ENCODE measurements at regions of chr17 and their contacts with region 1.

Region 1: GRCh38 chr17:72556944-72557826 is 436.4 kb downstream of the SOX9 start:
- DNase-seq: peak; percentile 67
- H3K4me3 ChIP-seq: no peak overlapping the region
- H3K27ac ChIP-seq: no peak overlapping the region
- H3K4me1 ChIP-seq: peaks cover 23% of the 10 kb centered on the region
- H3K27me3 ChIP-seq: no peaks in the 10 kb centered on the region
- CTCF ChIP-seq: peak; percentile 80 to 88

Region 2: DNA sequence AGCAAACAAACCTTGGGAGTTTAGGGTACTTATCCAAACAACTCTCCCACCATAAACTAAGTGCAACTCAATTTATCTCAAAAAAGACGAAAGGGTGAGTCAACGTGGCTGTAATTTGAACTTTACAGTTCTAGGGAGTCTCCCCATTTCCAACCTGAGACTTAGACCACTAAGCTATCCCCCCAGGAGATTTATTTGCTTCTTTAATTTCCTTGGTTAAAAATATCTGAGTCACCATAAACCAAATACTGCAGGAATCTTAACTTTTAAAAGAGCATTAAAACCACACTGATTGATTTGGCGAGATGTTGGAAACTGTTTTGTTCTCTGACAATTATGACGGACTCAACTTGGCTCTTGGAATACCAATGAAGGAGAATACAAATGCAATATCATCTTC is 735.7 kb before region 1 on chr17:
- CTCF ChIA-PET with region 1: no interaction called
- dilution Hi-C with region 1: no loop called
- in situ Hi-C with region 1: no loop called
- intact Hi-C with region 1: no loop called
- DNase-seq: no peak
- H3K4me3 ChIP-seq: no peak overlapping the region
- H3K27ac ChIP-seq: no peak overlapping the region
- H3K4me1 ChIP-seq: no peaks in the 10 kb centered on the region
- H3K27me3 ChIP-seq: no peaks in the 10 kb centered on the region
- CTCF ChIP-seq: no peak

Region 3: GRCh38 chr17:72445055-72445991 is 111.9 kb before region 1 on chr17:
- CTCF ChIA-PET with region 1: no interaction called
- dilution Hi-C with region 1: no loop called
- in situ Hi-C with region 1: no loop called
- intact Hi-C with region 1: no loop called
- DNase-seq: no peak
- H3K4me3 ChIP-seq: no peak overlapping the region
- H3K27ac ChIP-seq: no peak overlapping the region
- H3K4me1 ChIP-seq: no peaks in the 10 kb centered on the region
- H3K27me3 ChIP-seq: no peaks in the 10 kb centered on the region
- CTCF ChIP-seq: no peak

Region 4: GRCh38 chr17:72510397-72511016 is 46.7 kb before region 1 on chr17:
- CTCF ChIA-PET with region 1: no interaction called
- dilution Hi-C with region 1: no loop called
- in situ Hi-C with region 1: no loop called
- intact Hi-C with region 1: no loop called
- DNase-seq: no peak
- H3K4me3 ChIP-seq: no peak overlapping the region
- H3K27ac ChIP-seq: no peak overlapping the region
- H3K4me1 ChIP-seq: no peaks in the 10 kb centered on the region
- H3K27me3 ChIP-seq: no peaks in the 10 kb centered on the region
- CTCF ChIP-seq: no peak

Region 5: DNA sequence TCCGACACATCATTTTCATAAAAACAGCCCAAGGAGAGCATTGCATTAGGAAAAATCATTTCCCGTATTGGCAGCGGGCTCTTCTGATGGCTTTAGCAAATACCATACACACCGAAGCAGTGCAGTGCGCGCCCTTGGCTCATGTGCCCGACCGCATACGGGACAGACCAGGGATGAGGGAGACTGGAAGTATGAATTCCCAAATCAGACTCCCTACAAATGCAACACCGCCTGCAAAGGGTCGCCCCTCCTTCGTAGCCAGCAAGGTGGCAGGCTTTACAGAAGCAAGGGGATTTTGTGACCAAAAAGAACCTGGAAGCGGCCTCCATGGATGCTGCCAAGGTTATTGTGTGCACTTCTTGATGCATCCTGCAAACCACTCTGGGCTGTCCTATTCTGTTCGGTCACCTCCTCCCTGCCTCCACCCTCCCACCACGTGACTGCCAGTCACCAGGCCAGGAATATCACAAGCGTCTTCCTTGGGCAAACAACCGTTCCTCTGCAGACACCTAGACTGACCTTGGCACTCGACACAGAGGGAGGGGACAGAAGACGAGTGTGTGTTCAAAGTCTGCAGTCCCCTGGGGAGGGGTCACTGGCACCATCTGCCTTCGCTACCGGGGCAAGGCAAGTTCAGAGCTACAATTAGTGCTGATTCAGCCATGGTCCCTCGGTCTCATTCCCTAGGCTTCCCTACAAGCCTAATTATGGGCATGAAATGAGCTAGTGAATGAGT is 74.9 kb after region 1 on chr17:
- CTCF ChIA-PET with region 1: no interaction called
- dilution Hi-C with region 1: no loop called
- in situ Hi-C with region 1: no loop called
- intact Hi-C with region 1: loop called (anchors 2 kb)
- DNase-seq: no peak
- H3K4me3 ChIP-seq: no peak overlapping the region
- H3K27ac ChIP-seq: no peak overlapping the region
- H3K4me1 ChIP-seq: peaks cover 30% of the 10 kb centered on the region
- H3K27me3 ChIP-seq: no peaks in the 10 kb centered on the region
- CTCF ChIP-seq: no peak

Region 6: DNA sequence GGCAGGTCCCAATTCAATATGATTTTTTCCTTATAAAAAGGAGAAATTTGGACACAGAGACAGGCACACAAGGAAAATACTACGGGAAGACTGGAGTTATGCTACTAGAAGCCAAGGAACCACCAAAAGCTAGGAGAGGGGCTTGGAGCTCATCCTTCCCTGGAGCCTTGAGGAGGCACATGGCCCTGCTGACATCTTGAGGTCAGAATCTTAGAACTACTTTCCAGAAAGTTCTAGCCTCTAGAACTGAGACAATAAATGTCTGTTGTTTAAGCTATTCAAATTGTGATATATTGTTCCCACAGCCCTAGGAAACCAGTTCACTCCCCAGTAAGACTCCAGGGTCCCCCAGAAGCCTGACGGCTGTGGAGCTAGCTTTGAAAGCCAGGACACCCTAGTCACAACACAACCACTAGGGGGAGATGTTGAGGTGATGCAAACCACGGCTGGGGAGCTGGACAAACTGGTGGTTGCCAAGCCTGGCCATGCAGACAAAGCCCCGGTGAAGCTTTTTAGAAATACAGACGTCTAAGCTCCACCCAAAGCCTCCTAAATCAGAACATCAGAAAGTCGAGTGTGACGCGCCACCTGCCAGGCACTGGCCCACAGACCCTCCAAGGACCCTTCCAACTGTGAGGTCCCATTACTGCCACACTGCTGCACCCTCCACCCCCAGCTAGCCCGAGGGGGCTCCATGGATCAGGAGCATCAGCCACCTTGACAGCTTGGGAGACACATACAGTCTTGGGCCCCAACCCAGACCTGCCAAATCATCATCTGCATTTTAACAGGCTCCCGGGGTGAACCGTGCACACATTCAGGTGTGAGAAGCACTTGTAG is 428.9 kb after region 1 on chr17:
- CTCF ChIA-PET with region 1: interaction called, 6 read pairs
- dilution Hi-C with region 1: no loop called
- in situ Hi-C with region 1: loop called in 1 of 2 experiments (anchors 25 kb)
- intact Hi-C with region 1: loop called (anchors 5 kb)
- DNase-seq: peak; percentile 58
- H3K4me3 ChIP-seq: no peak overlapping the region
- H3K27ac ChIP-seq: no peak overlapping the region
- H3K4me1 ChIP-seq: peaks cover 9% of the 10 kb centered on the region
- H3K27me3 ChIP-seq: no peaks in the 10 kb centered on the region
- CTCF ChIP-seq: peak; percentile 86 to 92

Region 7: DNA sequence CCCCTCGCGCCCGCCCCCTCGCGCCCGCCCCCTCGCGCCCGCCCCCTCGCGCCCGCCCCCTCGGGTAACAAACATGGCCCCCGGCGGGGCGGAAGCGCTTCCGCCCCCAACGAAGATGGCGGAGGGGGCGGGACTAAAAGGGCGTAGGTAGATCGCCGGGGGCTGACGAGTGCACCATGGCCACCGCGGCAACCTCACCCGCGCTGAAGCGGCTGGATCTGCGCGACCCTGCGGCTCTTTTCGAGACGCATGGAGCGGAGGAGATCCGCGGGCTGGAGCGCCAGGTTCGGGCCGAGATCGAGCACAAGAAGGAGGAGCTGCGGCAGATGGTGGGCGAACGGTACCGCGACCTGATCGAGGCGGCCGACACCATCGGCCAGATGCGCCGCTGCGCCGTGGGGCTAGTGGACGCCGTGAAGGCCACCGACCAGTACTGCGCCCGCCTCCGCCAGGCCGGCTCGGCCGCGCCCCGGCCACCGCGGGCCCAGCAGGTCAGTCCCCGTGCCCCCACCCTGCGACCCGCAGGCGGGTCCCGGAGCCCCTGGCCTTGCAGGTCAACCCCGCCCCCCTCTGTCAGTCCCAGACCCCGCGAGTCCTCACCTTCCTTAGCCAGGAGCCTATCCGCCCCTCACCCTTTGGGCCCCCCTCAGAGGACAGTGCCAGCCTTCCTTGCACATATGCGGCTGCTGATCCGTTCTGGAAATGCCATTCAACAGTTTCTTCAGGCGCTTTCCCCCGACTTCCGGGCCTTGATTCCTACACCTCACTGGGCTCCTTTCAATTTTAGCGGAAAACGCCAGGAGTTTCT is 635.9 kb after region 1 on chr17 and contains the start of gene COG1:
- CTCF ChIA-PET with region 1: interaction called, 8 read pairs
- dilution Hi-C with region 1: no loop called
- in situ Hi-C with region 1: loop called (anchors 10 to 25 kb)
- intact Hi-C with region 1: loop called (anchors 1 kb)
- DNase-seq: peak; percentile 86
- H3K4me3 ChIP-seq: peak within 1 kb of the TSS; percentile 73 to 96 (median 80)
- H3K27ac ChIP-seq: peak within 1 kb of the TSS; percentile 57
- H3K4me1 ChIP-seq: peaks cover 4% of the 10 kb centered on the region
- H3K27me3 ChIP-seq: no peaks in the 10 kb centered on the region
- CTCF ChIP-seq: no peak
- total RNA-seq, gene COG1: 23.3 to 35.2 TPM

Measured in mammary epithelial cell (primary cell).